Activated CD4-positive, alpha-beta T cell treated with anti-CD3 and anti-CD28 coated beads for 36 hours (primary cell): ENCODE measurements at regions of chr1 and their contacts with region 1.

Region 1: DNA sequence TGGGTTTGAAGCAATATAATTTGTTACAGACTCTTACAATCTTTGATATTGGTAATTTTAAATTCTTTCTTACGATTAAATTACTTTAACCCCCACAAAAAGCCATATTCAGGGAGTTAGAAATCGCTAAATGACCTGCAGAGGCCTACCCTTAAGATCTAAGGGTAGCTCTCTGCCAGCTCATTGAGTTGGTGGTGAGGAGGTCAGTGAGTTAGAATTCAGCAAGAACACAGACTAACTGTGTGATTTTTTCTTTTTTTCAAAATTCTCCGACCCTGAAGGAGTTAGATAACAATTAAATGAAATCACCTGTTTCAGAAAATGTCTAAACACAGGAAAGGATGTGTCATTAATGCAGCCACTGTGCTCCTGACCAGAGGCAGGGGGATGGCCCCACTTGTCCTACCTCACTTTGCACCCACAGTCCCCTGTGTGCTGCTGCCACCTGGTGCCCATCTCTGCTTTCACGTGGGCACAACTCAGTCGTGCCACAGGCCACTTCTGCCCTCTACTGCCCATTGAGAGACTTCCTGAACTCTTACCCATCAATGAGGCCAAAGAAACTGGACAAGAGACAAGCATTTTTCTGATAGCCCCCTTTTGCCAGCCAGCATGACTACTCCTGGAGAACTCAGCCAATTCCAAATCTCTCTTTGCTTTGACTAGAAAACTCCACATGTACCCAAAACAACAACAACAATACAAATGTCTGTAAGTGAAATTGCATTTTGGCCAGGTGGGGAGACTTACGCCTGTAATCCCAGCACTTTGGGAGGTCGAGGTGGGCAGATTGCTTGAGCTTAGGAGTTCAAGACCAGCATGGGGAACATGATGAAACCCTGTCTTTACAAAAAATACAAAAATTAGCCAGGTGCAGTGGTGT is 8.4 kb downstream of the CFAP45 start:
- DNase-seq: peak; percentile 88
- ATAC-seq: peak; percentile 98
- H3K4me3 Mint-ChIP-seq: no peak overlapping the region
- H3K27ac Mint-ChIP-seq: no peak overlapping the region
- H3K4me1 Mint-ChIP-seq: peaks cover 4% of the 10 kb centered on the region
- H3K27me3 Mint-ChIP-seq: no peaks in the 10 kb centered on the region

Region 2: DNA sequence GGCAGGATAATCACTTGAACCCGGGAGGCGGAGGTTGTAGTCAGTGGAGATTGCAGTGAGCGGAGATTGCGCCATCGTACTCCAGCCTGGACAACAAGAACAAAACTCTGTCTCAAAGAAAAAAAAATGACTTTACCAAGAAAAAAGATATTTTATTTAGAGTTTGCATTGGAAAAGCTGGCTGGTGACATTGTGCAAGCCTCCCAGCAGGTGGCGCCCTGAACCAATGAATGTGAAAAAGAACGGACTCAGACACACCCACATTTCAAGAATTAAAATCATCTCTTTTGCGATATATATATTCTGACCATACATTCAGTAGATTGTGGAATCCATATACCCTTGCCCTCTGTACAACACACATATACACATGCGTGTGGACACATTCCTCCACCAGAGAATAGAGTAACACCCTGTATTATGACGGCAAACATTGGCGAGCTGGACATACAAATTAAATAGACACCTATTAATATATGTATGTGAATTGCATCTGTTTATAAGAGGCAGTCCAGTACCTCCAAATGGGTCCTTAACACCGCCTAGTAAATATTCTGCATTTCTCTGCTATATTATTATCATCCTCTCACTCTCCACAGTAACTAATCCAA is 759.1 kb before region 1 on chr1:
- CTCF ChIA-PET with region 1: no interaction called
- POLR2A ChIA-PET with region 1: no interaction called
- intact Hi-C with region 1: loop called in 1 of 2 experiments (anchors 2 kb)
- DNase-seq: peak; percentile 87
- ATAC-seq: peak; percentile 51
- H3K4me3 Mint-ChIP-seq: no peak overlapping the region
- H3K27ac Mint-ChIP-seq: no peak overlapping the region
- H3K4me1 Mint-ChIP-seq: no peaks in the 10 kb centered on the region
- H3K27me3 Mint-ChIP-seq: peaks cover 5% of the 10 kb centered on the region

Region 3: GRCh38 chr1:159780583-159781582 is 110.6 kb before region 1 on chr1 and contains the start of gene DUSP23:
- CTCF ChIA-PET with region 1: interaction called, 13 read pairs
- POLR2A ChIA-PET with region 1: no interaction called
- intact Hi-C with region 1: loop called (anchors 1 to 5 kb)
- DNase-seq: peak; percentile 97
- ATAC-seq: peak; percentile 99
- H3K4me3 Mint-ChIP-seq: peak within 1 kb of the TSS; percentile 70
- H3K27ac Mint-ChIP-seq: peak within 1 kb of the TSS; percentile 14
- H3K4me1 Mint-ChIP-seq: peaks cover 12% of the 10 kb centered on the region
- H3K27me3 Mint-ChIP-seq: peaks cover 2% of the 10 kb centered on the region
- total RNA-seq, gene DUSP23: 23.9 to 26.8 TPM

Region 4: GRCh38 chr1:159804924-159805323 is 86.6 kb before region 1 on chr1:
- CTCF ChIA-PET with region 1: interaction called, 150 read pairs
- POLR2A ChIA-PET with region 1: no interaction called
- intact Hi-C with region 1: no loop called
- DNase-seq: no peak
- ATAC-seq: no peak
- H3K4me3 Mint-ChIP-seq: no peak overlapping the region
- H3K27ac Mint-ChIP-seq: no peak overlapping the region
- H3K4me1 Mint-ChIP-seq: peaks cover 9% of the 10 kb centered on the region
- H3K27me3 Mint-ChIP-seq: no peaks in the 10 kb centered on the region

Region 5: GRCh38 chr1:159854693-159855192 is 36.8 kb before region 1 on chr1:
- CTCF ChIA-PET with region 1: interaction called, 9 read pairs
- POLR2A ChIA-PET with region 1: interaction called, 4 read pairs
- intact Hi-C with region 1: loop called in 1 of 2 experiments (anchors 1 kb)
- DNase-seq: peak; percentile 87
- ATAC-seq: peak; percentile 96
- H3K4me3 Mint-ChIP-seq: peak overlapping the region; percentile 75
- H3K27ac Mint-ChIP-seq: peak overlapping the region; percentile 58
- H3K4me1 Mint-ChIP-seq: peaks cover 10% of the 10 kb centered on the region
- H3K27me3 Mint-ChIP-seq: no peaks in the 10 kb centered on the region

Region 6: DNA sequence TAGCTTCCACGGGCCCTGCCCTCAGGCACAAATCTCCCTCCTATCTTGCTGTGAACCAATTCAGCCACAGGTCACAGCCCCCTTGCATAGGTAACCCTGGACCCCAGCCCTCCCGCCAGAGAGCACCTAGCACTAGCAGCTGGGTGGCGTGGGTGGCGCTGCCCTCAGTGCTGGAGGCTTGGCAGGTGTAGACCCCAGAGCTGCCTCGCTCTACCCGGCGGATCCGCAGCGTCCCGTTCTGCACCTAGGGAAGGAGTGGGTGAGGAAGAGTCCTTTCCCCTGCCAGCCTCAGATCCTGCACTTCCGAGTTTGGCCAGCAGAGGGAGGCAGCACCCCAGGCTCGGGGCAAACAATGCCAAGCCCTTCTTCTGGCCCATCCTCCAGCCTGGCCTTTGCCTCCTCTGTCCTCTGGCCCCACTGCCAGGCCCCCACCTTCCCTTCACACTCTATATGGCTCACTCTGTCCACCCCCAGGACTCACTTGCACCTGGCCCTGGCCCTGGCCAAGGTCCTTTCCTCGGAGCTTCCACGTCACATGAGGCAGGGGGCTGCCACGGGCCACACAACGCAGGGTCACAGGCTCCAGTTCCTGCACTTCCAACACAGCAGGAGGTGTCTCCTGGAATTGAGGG is 44.9 kb after region 1 on chr1:
- CTCF ChIA-PET with region 1: no interaction called
- POLR2A ChIA-PET with region 1: no interaction called
- intact Hi-C with region 1: no loop called
- DNase-seq: peak; percentile 90
- ATAC-seq: peak; percentile 89
- H3K4me3 Mint-ChIP-seq: no peak overlapping the region
- H3K27ac Mint-ChIP-seq: no peak overlapping the region
- H3K4me1 Mint-ChIP-seq: peaks cover 5% of the 10 kb centered on the region
- H3K27me3 Mint-ChIP-seq: peaks cover 4% of the 10 kb centered on the region